PC-3 (cell line): ENCODE measurements at regions of chr11 and their contacts with region 1.

Region 1: DNA sequence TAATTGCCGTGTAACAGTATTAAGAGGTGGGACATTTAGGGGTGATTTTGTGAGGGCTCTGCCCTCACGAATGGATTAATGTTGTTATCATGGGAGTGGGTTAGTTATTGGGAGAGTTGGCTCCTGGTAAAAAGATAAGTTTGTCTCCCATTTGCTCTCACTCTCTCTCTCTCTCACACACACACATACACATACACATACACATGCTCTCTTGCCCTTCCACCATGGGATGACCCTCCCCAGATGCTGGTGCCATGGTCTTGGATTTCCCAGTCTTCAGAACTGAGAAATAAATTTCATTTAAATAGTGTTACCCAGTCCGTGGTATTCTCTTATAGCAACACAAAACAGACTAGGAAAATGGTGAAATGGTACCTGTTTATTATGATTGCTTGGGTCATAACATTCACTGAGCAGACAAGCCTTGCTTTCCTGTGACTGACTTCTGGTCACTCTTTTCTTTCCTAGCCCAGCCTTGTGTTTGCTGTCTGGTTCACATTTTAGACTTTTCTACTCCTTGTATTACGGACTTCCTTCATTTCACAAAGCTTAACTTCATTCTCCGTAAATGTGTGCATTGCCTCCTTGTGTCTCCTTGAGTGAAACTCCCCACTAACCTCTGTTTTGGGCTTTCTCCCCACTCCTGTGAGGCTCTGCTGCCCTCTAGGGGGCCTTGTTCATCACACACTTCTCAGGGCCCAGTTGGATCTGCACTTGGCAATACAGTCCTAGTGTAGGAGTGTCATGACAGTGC is 206.5 kb upstream of the CTSC start:
- DNase-seq: peak; percentile 98
- ATAC-seq: peak; percentile 100
- H3K4me3 ChIP-seq: peak overlapping the region; percentile 14; the same call in 1 of the 2 replicates
- H3K27ac ChIP-seq: peak overlapping the region; percentile 8; the same call in 1 of the 2 replicates
- H3K4me1 ChIP-seq: peaks cover 14% of the 10 kb centered on the region
- H3K27me3 ChIP-seq: no peaks in the 10 kb centered on the region
- CTCF ChIP-seq: peak; percentile 100

Region 2: GRCh38 chr11:87722756-87723565 is 821.1 kb before region 1 on chr11:
- CTCF ChIA-PET with region 1: no interaction called
- POLR2A ChIA-PET with region 1: no interaction called
- intact Hi-C with region 1: loop called (anchors 2 kb)
- DNase-seq: peak; percentile 64
- ATAC-seq: peak; percentile 72
- H3K4me3 ChIP-seq: 0 out of 2 replicates have a peak overlapping the region, but pooled peaks have one; percentile 8
- H3K27ac ChIP-seq: no peak overlapping the region
- H3K4me1 ChIP-seq: peaks cover 11% of the 10 kb centered on the region
- H3K27me3 ChIP-seq: no peaks in the 10 kb centered on the region
- CTCF ChIP-seq: peak; percentile 94

Region 3: DNA sequence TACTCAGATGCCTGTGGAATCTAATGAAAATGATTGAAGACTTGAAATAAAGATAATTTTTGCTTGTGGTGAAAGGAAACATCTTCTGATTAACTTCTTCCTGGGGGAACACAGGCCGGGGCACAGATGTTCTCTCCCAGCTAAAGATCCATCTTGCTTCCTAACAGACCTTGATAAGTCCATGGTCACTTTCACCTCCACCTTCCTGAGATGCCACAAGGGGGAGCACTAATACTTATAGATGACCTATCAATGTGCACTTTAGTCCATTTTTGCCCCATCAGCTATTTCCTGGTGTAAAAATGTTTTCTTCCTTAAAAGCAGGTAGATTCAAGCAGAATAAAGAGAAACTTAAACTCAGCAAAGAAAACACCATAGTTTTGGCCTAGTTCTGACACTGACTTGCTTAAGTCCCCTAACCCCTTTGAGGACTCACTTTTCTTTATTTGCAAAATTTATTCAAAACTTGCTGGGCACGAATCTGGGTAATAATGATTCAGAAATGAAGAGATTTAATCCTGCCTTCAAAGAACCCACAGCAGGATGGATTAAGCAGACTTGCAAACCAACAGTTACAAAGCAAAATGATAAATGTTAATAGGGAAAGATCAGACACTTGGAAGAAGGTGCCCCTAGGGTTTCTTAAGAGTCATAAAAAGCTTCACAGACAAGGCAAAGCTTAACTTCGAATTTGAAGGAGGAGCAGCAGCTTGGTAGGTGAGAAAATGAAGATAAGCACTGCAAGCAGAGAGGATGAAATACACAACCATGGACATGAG is 527.5 kb before region 1 on chr11:
- CTCF ChIA-PET with region 1: interaction called, 9 read pairs
- POLR2A ChIA-PET with region 1: no interaction called
- intact Hi-C with region 1: loop called (anchors 1 kb)
- DNase-seq: peak; percentile 96
- ATAC-seq: peak; percentile 84
- H3K4me3 ChIP-seq: no peak overlapping the region
- H3K27ac ChIP-seq: no peak overlapping the region
- H3K4me1 ChIP-seq: peaks cover 21% of the 10 kb centered on the region
- H3K27me3 ChIP-seq: no peaks in the 10 kb centered on the region
- CTCF ChIP-seq: peak; percentile 97

Region 4: DNA sequence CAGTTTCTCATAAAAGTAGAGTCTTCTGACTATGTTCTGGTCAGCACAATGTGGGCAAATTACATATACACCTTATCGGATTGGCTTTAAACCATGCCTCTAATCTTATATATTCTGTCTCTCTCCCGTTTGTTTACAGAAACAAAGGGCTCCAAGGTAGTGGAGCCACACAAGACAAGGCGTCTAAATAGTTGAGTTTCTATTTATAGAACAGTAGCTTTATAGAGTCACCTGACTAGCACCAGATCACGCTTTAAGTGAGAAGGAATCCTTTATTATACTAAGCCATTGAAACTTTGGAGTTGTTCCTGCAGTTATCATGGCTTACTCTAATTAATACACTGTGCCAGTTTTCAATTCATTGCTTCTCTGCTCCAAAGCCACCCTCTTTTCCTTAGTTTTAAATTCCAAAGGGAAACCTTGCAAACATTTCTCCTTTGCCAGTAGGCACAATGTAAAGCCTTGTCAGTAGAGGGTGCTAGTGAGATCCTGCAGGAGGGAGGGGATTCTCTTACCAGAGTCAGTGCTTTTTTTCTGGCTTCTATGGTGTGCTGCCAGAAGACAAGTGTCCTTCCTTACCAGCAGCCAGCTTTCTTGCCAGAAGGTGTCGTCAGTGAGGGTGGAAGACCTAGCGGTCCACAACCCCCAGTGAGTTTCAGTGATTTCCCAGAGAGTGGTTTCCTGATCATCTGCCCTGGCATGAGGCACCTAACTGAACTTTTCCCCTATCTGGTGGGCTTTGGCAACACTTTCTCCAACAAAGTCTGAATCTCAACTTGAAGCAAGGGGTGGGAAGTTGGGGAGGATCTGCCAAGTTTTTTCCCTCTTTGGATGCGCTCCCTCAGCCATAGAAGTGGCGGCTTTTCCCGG is 440.5 kb before region 1 on chr11:
- CTCF ChIA-PET with region 1: interaction called, 3 read pairs
- POLR2A ChIA-PET with region 1: no interaction called
- intact Hi-C with region 1: loop called (anchors 5 kb)
- DNase-seq: peak; percentile 79
- ATAC-seq: peak; percentile 49
- H3K4me3 ChIP-seq: no peak overlapping the region
- H3K27ac ChIP-seq: peak overlapping the region; percentile 59
- H3K4me1 ChIP-seq: peaks cover 30% of the 10 kb centered on the region
- H3K27me3 ChIP-seq: no peaks in the 10 kb centered on the region
- CTCF ChIP-seq: peak; percentile 88

Region 5: DNA sequence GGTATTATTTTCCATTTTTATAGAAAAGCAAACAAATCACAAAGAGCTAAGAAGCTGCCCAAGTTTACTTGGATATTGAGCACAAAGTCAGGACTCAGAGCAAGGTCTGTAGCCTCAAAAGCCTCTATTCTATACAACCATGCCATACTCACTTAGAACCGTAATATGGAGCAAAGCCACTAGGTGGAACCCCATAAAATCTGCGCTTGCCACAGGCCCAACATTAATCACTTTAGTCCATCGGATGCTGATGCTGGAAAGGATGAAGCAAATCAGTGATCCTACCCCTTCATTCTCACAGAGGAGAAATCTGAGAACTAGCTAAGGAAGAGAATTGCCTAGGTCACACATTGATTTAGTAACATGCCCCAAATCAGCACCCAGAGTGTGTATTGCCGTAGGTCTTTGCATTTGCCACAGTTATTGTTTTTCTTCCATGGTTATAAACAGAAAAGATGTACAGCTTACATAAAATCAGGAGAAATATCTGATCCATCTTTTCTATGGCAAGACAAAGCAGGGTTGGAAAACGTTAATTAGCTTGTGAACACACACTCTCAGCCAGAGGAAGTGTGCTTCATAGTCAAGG is 312.1 kb before region 1 on chr11:
- CTCF ChIA-PET with region 1: no interaction called
- POLR2A ChIA-PET with region 1: no interaction called
- intact Hi-C with region 1: loop called (anchors 1 kb)
- DNase-seq: peak; percentile 70
- ATAC-seq: peak; percentile 99
- H3K4me3 ChIP-seq: no peak overlapping the region
- H3K27ac ChIP-seq: no peak overlapping the region
- H3K4me1 ChIP-seq: no peaks in the 10 kb centered on the region
- H3K27me3 ChIP-seq: no peaks in the 10 kb centered on the region
- CTCF ChIP-seq: peak; percentile 86

Region 6: GRCh38 chr11:88310246-88310645 is 233.8 kb before region 1 on chr11:
- CTCF ChIA-PET with region 1: interaction called, 3 read pairs
- POLR2A ChIA-PET with region 1: interaction called, 3 read pairs
- intact Hi-C with region 1: loop called (anchors 2 kb)
- DNase-seq: peak; percentile 57
- ATAC-seq: peak; percentile 72
- H3K4me3 ChIP-seq: no peak overlapping the region
- H3K27ac ChIP-seq: no peak overlapping the region
- H3K4me1 ChIP-seq: peaks cover 28% of the 10 kb centered on the region
- H3K27me3 ChIP-seq: no peaks in the 10 kb centered on the region
- CTCF ChIP-seq: no peak

Region 7: GRCh38 chr11:88469561-88470225 is 74.4 kb before region 1 on chr11:
- CTCF ChIA-PET with region 1: no interaction called
- POLR2A ChIA-PET with region 1: no interaction called
- intact Hi-C with region 1: no loop called
- DNase-seq: no peak
- ATAC-seq: no peak
- H3K4me3 ChIP-seq: no peak overlapping the region
- H3K27ac ChIP-seq: no peak overlapping the region
- H3K4me1 ChIP-seq: no peaks in the 10 kb centered on the region
- H3K27me3 ChIP-seq: no peaks in the 10 kb centered on the region
- CTCF ChIP-seq: no peak

Region 8: DNA sequence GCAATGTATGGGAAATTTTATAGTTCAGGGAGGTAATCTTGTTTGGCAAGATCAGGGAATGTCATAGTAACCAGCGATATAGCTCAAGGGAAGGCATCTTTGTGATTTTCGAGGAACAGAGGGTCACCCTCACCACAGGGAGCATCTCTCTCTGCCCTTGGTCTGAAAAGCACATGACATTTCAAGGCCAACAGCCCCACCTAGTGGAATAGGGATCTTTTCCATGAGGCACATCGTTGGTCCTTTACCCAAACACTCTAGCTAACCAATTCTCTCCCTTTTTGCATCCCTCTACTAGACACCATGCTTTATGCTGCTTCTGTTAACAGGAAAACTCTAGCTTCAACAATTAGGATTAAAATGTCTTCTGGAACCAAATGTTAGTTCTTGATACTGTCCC is 342.7 kb after region 1 on chr11:
- CTCF ChIA-PET with region 1: interaction called, 4 read pairs
- POLR2A ChIA-PET with region 1: no interaction called
- intact Hi-C with region 1: loop called (anchors 1 kb)
- DNase-seq: peak; percentile 94
- ATAC-seq: peak; percentile 99
- H3K4me3 ChIP-seq: no peak overlapping the region
- H3K27ac ChIP-seq: no peak overlapping the region
- H3K4me1 ChIP-seq: no peaks in the 10 kb centered on the region
- H3K27me3 ChIP-seq: no peaks in the 10 kb centered on the region
- CTCF ChIP-seq: peak; percentile 87